ENCODE measurements at regions of chr6 and their contacts with region 1.

Region 1: DNA sequence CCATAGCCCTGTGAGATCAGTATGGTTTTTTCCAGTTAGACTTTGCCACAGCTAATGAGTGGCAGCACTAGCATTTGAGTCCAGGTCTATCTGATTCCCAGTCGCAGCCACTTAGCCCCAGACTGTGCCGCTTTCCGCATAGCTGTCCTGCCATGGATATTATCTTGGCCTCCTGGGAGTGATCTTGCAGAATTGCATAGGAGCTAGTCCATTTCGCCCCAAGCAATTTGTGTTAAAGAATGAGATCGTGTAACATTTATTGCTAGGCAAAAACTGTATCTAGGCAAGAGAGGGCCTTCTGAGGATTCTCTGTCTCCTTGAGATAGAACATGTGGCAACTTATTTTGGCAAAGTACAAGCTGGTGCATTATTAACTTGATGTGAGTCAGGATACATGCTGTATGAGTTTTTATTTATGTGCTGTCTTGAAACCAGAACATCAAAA is 74.2 kb downstream of the EZR start:
- DNase-seq: no peak
- ATAC-seq: no peak; the same call in 1 of the 2 replicates
- H3K4me3 ChIP-seq: no peak overlapping the region
- H3K27ac ChIP-seq: no peak overlapping the region
- H3K4me1 ChIP-seq: no peaks in the 10 kb centered on the region
- H3K27me3 ChIP-seq: no peaks in the 10 kb centered on the region
- CTCF ChIP-seq: no peak

Region 2: DNA sequence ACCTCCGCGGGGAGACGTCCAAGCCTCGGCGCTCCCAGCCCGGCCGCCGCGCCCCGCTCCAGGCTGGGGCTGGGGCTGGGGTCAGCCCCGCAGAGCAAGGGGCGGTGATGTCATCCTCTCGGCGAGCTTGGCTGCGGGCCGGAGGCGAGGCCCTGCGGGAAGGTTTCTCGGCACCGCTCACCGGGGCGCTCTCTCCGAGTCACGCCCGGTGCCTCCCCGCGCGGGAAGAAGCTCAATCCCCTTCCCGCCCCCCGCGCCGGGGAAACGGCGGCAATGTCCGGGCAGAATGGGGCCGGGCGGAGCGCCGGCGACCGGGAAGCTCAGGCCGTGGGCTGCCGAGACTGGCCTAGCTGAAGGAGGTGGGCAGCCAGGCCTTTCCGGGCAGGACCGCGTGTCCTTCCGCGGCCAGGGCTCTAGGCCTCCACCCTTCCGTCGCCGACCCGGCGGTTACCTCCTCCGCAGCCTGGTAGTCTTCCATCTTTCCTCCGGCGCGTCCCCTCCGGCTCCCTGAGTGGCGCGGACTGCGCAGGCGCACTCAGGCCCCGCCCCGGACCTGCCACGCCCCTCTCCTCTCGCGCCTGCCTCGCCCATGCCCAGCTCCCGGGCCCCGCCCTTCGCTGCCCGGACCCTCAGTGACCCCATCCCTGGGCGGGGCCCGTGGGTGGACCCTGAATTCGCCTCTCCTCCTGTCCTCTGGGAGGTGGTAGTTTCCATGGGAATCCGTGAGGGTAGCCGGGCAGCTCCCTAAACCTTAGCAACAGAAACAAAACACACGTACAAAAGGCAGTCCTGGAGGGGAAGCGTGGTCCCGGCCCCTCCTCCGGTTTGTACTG is 100.6 kb before region 1 on chr6 and contains the start of gene DYNLT1:
- CTCF ChIA-PET with region 1: no interaction called
- POLR2A ChIA-PET with region 1: no interaction called
- in situ Hi-C with region 1: no loop called
- intact Hi-C with region 1: no loop called
- DNase-seq: peak; percentile 62
- ATAC-seq: peak; percentile 96
- H3K4me3 ChIP-seq: peak within 1 kb of the TSS; percentile 74 to 90
- H3K27ac ChIP-seq: peak within 1 kb of the TSS; percentile 85
- H3K4me1 ChIP-seq: peaks cover 39% of the 10 kb centered on the region
- H3K27me3 ChIP-seq: no peaks in the 10 kb centered on the region
- CTCF ChIP-seq: no peak
- total RNA-seq, gene DYNLT1: 137 TPM

Region 3: GRCh38 chr6:158778005-158778527 is 33.1 kb after region 1 on chr6:
- CTCF ChIA-PET with region 1: no interaction called
- POLR2A ChIA-PET with region 1: no interaction called
- in situ Hi-C with region 1: loop called (anchors 5 kb)
- intact Hi-C with region 1: no loop called
- DNase-seq: no peak
- ATAC-seq: no peak
- H3K4me3 ChIP-seq: no peak overlapping the region
- H3K27ac ChIP-seq: no peak overlapping the region
- H3K4me1 ChIP-seq: no peaks in the 10 kb centered on the region
- H3K27me3 ChIP-seq: no peaks in the 10 kb centered on the region
- CTCF ChIP-seq: no peak